Activated CD4-positive, alpha-beta memory T cell treated with anti-CD3 and anti-CD28 coated beads for 36 hours (primary cell): ENCODE measurements at regions of chr3 and their contacts with region 1.

Region 1: DNA sequence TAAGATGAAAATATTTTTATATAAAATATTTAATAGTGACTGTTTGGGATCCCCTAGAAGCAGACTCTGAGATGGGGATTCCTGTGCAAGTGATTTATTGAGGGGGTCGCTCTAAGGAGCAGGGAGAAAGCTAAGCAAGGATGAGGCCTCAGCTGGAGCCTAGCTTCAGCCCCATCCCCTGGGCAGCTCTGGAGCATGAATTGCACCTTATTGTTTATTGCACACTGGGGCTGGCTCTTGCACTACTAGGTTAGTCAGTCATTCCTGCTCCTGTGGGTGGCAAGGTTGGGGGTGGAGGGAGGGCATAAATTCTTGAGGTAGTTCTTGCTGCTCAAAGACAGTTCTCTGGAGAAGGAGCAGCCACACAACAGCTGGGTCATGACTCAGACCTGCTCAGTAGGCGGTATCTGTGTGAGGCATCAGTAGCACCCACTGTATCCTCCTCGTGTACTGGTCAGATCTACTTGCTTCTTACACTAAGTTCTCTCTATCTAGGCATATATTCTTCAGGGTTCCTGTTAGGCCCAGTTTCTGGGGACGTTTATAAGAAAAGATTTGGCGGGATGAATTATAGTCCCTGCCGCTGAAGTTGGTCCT is 27.2 kb upstream of the TNFSF10 start:
- DNase-seq: peak; percentile 91
- H3K4me3 Mint-ChIP-seq: no peak overlapping the region
- H3K27ac Mint-ChIP-seq: peak overlapping the region; percentile 52
- H3K4me1 Mint-ChIP-seq: peaks cover 32% of the 10 kb centered on the region
- H3K27me3 Mint-ChIP-seq: no peaks in the 10 kb centered on the region

Region 2: GRCh38 chr3:171600030-171600429 is 950.4 kb before region 1 on chr3:
- CTCF ChIA-PET with region 1: no interaction called
- POLR2A ChIA-PET with region 1: no interaction called
- intact Hi-C with region 1: no loop called
- DNase-seq: no peak
- H3K4me3 Mint-ChIP-seq: no peak overlapping the region
- H3K27ac Mint-ChIP-seq: no peak overlapping the region
- H3K4me1 Mint-ChIP-seq: no peaks in the 10 kb centered on the region
- H3K27me3 Mint-ChIP-seq: no peaks in the 10 kb centered on the region

Region 3: GRCh38 chr3:172517859-172518466 is 32.5 kb before region 1 on chr3:
- CTCF ChIA-PET with region 1: no interaction called
- POLR2A ChIA-PET with region 1: interaction called, 11 read pairs
- intact Hi-C with region 1: loop called (anchors 1 kb)
- DNase-seq: peak; percentile 82
- H3K4me3 Mint-ChIP-seq: peak overlapping the region; percentile 57
- H3K27ac Mint-ChIP-seq: peak overlapping the region; percentile 87
- H3K4me1 Mint-ChIP-seq: peaks cover 84% of the 10 kb centered on the region
- H3K27me3 Mint-ChIP-seq: no peaks in the 10 kb centered on the region

Region 4: DNA sequence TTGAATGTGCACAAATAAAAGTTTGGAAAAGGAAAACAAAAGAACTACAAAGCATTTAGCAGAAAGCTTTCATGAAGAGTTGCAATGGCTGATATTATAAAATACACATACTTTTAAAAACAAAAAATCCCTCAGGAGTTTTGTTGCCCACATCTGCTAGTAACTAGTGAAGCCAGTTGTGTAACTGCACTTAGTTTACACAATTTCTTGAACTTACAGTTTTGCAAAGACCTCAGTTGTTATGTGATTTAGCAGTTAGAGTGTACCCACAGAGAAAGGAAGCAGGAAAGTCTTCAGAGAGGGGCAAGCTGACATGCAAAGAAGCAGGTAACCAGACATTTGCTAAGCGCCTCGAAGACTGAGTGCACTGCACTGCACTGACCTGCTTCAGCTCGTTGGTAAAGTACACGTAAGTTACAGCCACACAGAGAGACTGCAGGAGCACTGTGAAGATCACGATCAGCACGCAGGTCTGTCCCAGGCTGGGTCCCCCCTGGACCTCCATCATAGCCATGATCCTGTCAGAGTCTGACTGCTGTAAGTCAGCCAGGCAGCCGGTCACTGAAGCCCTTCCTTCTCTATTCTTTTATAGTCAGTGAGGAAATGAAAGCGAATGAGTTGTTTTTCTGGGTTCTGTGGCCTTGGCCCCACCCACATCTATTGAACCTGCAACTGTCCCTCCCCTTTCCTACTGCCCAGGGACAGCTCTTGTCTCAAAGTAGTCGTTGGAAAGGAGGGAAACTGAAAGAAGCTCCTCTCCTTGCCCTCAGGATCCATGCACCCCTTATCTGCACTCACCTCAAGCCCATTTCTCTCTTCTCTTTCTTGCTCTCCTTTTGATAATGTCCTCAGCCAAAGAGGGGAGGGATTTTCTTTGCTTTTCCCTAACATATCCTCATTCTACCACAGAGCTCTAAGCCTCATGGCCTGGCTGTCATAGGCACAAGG is 27.3 kb before region 1 on chr3 and contains the start of gene TNFSF10:
- CTCF ChIA-PET with region 1: no interaction called
- POLR2A ChIA-PET with region 1: interaction called, 11 read pairs
- intact Hi-C with region 1: loop called (anchors 1 kb)
- DNase-seq: peak; percentile 84
- H3K4me3 Mint-ChIP-seq: peak within 1 kb of the TSS; percentile 94
- H3K27ac Mint-ChIP-seq: peak within 1 kb of the TSS; percentile 94
- H3K4me1 Mint-ChIP-seq: peaks cover 48% of the 10 kb centered on the region
- H3K27me3 Mint-ChIP-seq: no peaks in the 10 kb centered on the region
- total RNA-seq, gene TNFSF10: 30.1 to 31.8 TPM

Region 5: GRCh38 chr3:172536993-172537419 is 13.4 kb before region 1 on chr3:
- CTCF ChIA-PET with region 1: no interaction called
- POLR2A ChIA-PET with region 1: no interaction called
- intact Hi-C with region 1: loop called (anchors 1 kb)
- DNase-seq: peak; percentile 30
- H3K4me3 Mint-ChIP-seq: peak overlapping the region; percentile 48
- H3K27ac Mint-ChIP-seq: peak overlapping the region; percentile 90
- H3K4me1 Mint-ChIP-seq: peaks cover 37% of the 10 kb centered on the region
- H3K27me3 Mint-ChIP-seq: no peaks in the 10 kb centered on the region

Region 6: GRCh38 chr3:172562871-172563863 is 12.7 kb after region 1 on chr3:
- CTCF ChIA-PET with region 1: no interaction called
- POLR2A ChIA-PET with region 1: interaction called, 13 read pairs
- intact Hi-C with region 1: loop called (anchors 1 kb)
- DNase-seq: peak; percentile 64
- H3K4me3 Mint-ChIP-seq: peak overlapping the region; percentile 42
- H3K27ac Mint-ChIP-seq: peak overlapping the region; percentile 94
- H3K4me1 Mint-ChIP-seq: peaks cover 33% of the 10 kb centered on the region
- H3K27me3 Mint-ChIP-seq: no peaks in the 10 kb centered on the region

Region 7: GRCh38 chr3:172580680-172581401 is 30.4 kb after region 1 on chr3:
- CTCF ChIA-PET with region 1: no interaction called
- POLR2A ChIA-PET with region 1: no interaction called
- intact Hi-C with region 1: loop called (anchors 1 kb)
- DNase-seq: no peak
- H3K4me3 Mint-ChIP-seq: peak overlapping the region; percentile 18
- H3K27ac Mint-ChIP-seq: peak overlapping the region; percentile 68
- H3K4me1 Mint-ChIP-seq: peaks cover 78% of the 10 kb centered on the region
- H3K27me3 Mint-ChIP-seq: peaks cover 2% of the 10 kb centered on the region